Activated T-helper 1 cell treated with anti-CD3 and anti-CD28 coated beads, Interleukin-12 subunit alpha, Interleukin-12 subunit beta, Interleukin-2, Interleukin-4 antibody, amounts not matched to agents 30 ng/mL and 10 ng/mL and 1 ng/mL, durations not matched to agents 14 hours and 24 hours and 36 hours (primary cell): ENCODE measurements at regions of chr3 and their contacts with region 1.

Region 1: GRCh38 chr3:112642912-112643506 is 2.1 kb upstream of the CCDC80 start:
- DNase-seq: peak; percentile 74
- H3K4me3 Mint-ChIP-seq: peak overlapping the region; percentile 68
- H3K27ac Mint-ChIP-seq: peak overlapping the region; percentile 61
- H3K4me1 Mint-ChIP-seq: peaks cover 27% of the 10 kb centered on the region
- H3K27me3 Mint-ChIP-seq: peaks cover 5% of the 10 kb centered on the region

Region 2: GRCh38 chr3:112688819-112689218 is 45.8 kb after region 1 on chr3:
- intact Hi-C with region 1: no loop called
- DNase-seq: no peak
- H3K4me3 Mint-ChIP-seq: no peak overlapping the region
- H3K27ac Mint-ChIP-seq: no peak overlapping the region
- H3K4me1 Mint-ChIP-seq: peaks cover 17% of the 10 kb centered on the region
- H3K27me3 Mint-ChIP-seq: peaks cover 11% of the 10 kb centered on the region

Region 3: DNA sequence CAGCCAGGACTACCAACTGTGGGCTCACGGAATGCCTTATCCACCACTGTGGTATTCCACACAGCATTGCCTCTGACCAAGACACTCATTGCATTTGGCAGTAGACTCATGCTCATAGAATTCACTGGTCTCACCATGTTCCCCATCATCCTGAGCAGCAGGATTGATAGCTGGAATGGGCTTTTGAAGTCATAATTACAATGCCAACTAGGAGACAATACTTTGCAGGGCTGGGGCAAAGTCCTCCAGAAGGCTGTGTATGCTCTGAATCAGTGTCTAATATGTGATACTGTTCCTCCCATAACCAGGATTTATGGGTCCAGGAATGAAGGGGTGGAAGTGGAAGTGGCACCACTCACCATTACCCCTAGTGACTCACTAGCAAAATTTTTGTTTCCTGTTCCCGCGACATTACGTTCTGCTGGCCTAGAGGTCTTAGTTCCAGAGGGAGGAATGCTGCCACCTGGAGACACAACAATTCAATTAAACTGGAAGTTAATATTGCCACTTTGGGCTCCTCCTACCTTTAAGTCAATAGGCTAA is 56.5 kb after region 1 on chr3:
- intact Hi-C with region 1: loop called (anchors 2 kb)
- DNase-seq: no peak
- H3K4me3 Mint-ChIP-seq: no peak overlapping the region
- H3K27ac Mint-ChIP-seq: no peak overlapping the region
- H3K4me1 Mint-ChIP-seq: no peaks in the 10 kb centered on the region
- H3K27me3 Mint-ChIP-seq: peaks cover 20% of the 10 kb centered on the region

Region 4: DNA sequence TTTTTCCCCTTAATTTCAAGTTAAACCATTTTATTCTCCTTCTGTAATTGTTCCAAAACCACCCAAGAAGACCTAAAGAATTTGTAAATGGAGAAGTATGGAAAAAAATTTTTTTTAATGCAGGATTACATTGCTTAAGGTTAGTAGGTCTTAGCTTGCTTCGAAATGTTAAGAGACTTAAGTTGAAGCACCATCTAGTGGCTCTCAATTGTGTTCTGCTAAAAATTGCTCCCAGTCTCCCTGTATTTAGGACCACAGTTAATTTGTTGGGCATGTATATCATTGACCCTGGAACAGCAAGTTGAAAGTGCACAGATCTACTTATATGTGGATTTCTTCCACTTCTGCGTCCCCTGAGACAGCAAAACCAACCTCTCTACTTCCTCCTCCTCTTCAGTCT is 171.3 kb after region 1 on chr3:
- intact Hi-C with region 1: loop called (anchors 1 kb)
- DNase-seq: no peak
- H3K4me3 Mint-ChIP-seq: no peak overlapping the region
- H3K27ac Mint-ChIP-seq: no peak overlapping the region
- H3K4me1 Mint-ChIP-seq: peaks cover 33% of the 10 kb centered on the region
- H3K27me3 Mint-ChIP-seq: peaks cover 3% of the 10 kb centered on the region

Region 5: DNA sequence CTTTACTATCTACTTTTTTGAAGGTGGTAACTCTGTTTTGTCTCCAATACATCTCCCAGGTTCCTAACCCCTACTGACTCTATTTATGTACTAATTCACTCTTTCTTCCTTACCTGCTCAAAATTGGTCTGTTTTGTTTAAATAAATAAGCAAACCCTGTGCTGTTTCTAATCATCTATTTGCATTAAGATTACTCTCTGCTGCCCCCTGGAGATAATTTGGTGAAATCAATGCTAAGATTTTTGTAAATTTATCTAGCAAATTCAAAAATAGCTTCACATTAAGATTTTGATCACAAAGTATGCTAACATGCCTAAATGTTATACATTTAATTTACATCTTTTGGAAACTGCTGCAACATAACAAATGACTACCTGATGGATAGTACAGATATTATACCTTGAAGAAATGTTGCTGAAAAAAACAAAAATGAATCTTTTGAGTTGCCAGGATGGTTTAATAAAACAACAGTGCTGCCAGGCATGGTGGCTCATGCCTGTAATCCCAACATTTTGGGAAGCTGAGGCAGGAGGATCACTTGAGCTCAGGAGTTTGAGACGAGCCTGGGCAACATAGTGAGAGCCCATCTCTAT is 336.3 kb after region 1 on chr3:
- intact Hi-C with region 1: loop called (anchors 1 kb)
- DNase-seq: no peak
- H3K4me3 Mint-ChIP-seq: no peak overlapping the region
- H3K27ac Mint-ChIP-seq: no peak overlapping the region
- H3K4me1 Mint-ChIP-seq: peaks cover 67% of the 10 kb centered on the region
- H3K27me3 Mint-ChIP-seq: no peaks in the 10 kb centered on the region

Region 6: DNA sequence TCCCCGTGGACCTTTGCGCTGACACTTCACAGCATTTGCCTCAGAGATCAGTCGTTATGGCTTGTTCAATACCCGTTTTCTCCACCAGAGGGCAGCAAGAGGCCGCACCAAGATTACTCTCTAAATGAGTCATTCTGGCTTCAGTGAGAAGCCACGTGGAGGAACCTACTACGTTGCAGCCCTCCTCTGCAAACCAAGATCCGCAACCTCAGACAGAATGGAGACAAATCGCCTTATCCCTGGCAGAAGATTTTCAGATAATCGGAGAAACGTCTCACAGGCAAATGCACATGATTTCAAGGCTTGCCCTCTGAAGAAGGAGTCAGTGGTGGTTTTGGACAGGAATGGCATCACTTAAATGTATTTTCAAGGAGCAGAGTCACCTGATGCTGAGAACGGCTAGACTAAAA is 408.3 kb after region 1 on chr3:
- intact Hi-C with region 1: loop called (anchors 1 kb)
- DNase-seq: peak; percentile 81
- H3K4me3 Mint-ChIP-seq: no peak overlapping the region
- H3K27ac Mint-ChIP-seq: no peak overlapping the region
- H3K4me1 Mint-ChIP-seq: no peaks in the 10 kb centered on the region
- H3K27me3 Mint-ChIP-seq: peaks cover 4% of the 10 kb centered on the region